ENCODE measurements at regions of chr4 and their contacts with region 1.

Region 1: GRCh38 chr4:123182289-123182688 is 214.3 kb upstream of the SPRY1 start:
- DNase-seq: no peak
- CTCF ChIP-seq: no peak

Region 2: GRCh38 chr4:123096038-123096437 is 86.3 kb before region 1 on chr4:
- CTCF ChIA-PET with region 1: no interaction called
- POLR2A ChIA-PET with region 1: no interaction called
- DNase-seq: no peak
- CTCF ChIP-seq: no peak

Region 3: GRCh38 chr4:123168812-123169211 is 13.5 kb before region 1 on chr4:
- CTCF ChIA-PET with region 1: interaction called, 10 read pairs
- POLR2A ChIA-PET with region 1: no interaction called
- DNase-seq: no peak
- CTCF ChIP-seq: no peak

Region 4: GRCh38 chr4:123206016-123206415 is 23.7 kb after region 1 on chr4:
- CTCF ChIA-PET with region 1: no interaction called
- POLR2A ChIA-PET with region 1: no interaction called
- DNase-seq: no peak
- CTCF ChIP-seq: no peak

Measured in GM10248 (cell line).